AG04450 (cell line): ENCODE measurements at regions of chr1 and their contacts with region 1.

Region 1: DNA sequence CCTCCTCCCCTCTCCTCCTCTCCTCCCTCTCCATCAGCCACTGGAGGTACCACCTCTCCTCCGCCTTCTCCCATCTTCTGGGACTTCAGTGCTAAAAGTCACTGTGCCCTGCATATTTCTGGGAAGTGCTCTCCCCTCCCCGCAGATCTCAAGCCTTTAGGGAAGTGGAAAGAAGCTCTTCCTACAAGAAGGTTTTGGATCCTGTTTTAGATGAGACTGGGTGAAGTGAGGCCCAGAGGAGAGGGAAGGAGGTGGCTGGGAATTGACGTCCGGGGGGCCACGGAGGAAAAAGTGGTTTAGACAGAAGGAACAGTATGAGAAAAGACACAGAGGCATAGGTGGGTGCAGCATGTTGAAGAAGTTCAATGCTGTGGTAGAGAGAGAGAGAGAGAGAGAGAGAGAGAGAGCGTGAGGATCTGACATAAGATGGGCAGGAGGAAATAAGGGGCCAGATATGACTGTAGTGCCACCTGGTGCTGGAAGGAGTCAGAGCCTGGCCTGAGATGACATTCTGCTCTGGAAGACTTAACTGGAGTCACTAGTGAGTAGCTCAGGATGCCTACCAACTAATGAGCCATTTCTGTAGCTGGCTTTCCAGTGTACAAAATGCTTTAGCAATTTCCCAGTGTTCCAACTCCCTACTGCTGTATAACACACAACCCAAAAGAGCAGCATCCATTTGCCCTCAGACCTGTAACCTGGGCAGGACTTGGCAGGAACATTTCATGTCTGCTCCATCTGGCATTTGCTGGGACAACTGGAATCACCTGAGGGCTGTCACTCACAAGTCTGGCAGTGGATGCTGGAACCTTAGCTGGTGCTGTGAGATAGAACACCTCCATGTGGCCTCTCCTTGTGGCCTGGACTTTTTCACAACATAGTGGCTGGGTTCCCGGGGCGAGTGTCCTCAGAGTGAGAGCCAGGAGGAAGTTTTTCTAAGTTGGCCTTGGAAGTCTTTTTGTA is 16.6 kb upstream of the ZSCAN20 start:
- DNase-seq: peak; percentile 72
- H3K4me3 ChIP-seq: no peak overlapping the region
- H3K27ac ChIP-seq: no peak overlapping the region
- H3K27me3 ChIP-seq: no peaks in the 10 kb centered on the region
- CTCF ChIP-seq: peak; percentile 82

Region 2: DNA sequence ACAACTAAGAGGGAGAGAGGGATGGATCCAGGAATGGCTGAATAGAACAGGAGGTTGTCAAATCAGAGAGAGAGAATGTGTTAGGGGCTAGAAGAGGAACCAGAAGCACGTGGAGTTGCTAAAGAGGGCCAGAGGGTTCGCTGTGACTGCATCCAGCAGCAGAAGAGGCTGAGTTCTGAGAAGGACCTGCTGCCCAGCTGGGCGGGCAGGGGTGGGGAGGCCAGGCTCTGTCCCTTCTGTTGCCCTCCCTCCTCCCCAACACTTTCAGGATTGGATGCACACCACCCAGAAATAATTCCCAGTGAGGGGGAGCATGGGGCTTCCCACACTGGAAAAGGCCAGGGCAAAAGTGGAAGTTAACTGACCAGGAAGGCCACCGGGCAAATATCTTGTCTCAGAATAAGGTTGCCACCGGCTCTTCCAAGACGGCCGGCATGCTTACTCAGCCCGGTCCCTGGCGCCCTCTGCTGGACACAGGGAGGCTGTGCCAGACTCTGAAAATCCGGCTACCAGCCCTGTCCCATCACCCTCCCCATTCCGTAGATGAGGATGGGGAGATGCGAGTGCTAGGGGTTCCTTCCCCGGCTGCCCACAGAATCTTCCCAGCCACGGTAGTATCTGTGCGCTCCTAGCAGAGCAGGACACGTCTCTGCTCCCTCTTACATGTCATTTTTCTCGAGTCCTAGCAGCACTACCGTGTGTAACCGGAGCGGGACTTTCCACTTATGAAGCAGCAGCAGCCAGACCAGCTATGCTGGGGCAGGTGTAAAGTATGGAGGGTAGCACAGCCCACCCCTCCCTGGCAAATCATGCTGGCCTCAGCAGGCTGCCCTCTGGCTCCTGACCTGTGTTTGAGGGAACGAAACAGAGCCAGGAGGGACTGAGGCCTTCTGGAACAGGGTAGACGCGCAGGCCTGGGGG is 88.1 kb before region 1 on chr1:
- CTCF ChIA-PET with region 1: interaction called, 15 read pairs
- POLR2A ChIA-PET with region 1: no interaction called
- DNase-seq: no peak
- H3K4me3 ChIP-seq: no peak overlapping the region
- H3K27ac ChIP-seq: no peak overlapping the region
- H3K27me3 ChIP-seq: no peaks in the 10 kb centered on the region
- CTCF ChIP-seq: peak; percentile 97

Region 3: DNA sequence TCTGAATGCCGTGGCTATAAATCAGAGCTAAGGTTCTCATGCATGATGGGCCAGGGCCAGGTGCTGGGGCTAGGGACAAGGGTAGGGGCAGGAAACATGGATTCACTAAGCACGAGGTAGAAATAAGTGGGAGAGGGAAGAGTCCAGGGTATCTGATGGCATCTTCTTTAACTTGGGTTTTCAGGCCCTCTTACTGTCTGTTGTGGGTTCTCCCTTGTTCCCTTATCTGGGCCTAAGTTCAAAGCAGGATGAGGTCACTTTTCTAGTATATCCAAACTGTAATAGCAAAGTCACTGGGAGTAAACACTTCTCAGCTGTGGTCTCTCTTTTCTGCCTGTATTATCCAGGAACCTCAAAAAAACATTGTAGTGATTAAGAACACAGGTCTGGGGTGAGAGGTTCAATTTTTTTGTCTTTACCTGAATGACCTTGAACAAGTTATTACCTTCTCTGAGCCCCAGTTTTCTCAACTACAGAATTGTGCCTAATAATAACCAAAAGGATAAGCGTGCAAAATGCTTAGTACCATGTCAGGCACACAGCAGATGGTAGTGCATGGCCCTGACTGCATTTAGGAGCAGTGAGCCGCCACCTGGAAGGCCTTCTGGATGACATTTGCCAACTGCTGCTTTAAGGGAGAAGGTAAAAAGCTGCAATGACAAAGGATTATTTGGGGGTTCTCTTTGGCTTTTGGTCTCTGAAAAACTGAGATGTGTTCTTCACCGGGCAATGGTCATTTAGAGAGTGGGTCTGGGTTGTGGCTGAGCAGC is 81.3 kb before region 1 on chr1:
- CTCF ChIA-PET with region 1: interaction called, 15 read pairs
- POLR2A ChIA-PET with region 1: interaction called, 3 read pairs
- DNase-seq: no peak
- H3K4me3 ChIP-seq: no peak overlapping the region
- H3K27ac ChIP-seq: peak overlapping the region; percentile 83
- H3K27me3 ChIP-seq: no peaks in the 10 kb centered on the region
- CTCF ChIP-seq: no peak

Region 4: DNA sequence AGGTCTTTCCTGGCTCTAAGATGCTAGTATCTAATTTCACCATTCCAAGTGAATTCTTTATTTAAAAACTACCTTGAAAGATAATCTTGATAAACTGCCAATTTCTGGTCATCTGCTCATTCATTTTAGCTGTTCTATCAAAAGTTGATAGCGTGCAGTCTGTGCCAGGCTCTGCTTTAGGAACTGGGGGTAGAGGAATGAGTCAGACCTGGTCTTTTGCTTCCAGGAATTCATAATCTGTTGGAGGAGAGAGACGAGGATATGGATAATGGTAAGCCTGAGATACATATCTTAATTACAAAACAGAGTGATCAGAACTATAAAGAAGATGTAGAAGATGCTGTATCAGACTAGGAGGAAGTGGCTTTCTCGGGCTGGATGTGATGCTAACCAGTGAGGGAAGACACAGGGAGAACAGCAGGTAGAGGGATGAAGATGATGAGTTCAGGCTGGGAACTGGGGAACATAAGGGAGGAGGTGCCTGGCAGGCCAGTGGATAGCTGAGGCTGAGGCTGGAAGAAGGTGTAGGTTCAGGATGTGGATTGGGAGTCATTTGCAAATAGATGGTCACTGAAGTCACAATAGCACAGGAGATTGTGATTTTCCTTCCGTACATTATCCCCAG is 12.6 kb before region 1 on chr1:
- CTCF ChIA-PET with region 1: interaction called, 19 read pairs
- POLR2A ChIA-PET with region 1: no interaction called
- DNase-seq: no peak
- H3K4me3 ChIP-seq: no peak overlapping the region
- H3K27ac ChIP-seq: no peak overlapping the region
- H3K27me3 ChIP-seq: no peaks in the 10 kb centered on the region
- CTCF ChIP-seq: no peak